Ascending aorta (tissue), 2 donors: ENCODE measurements at regions of chr5 and their contacts with region 1.

Region 1: GRCh38 chr5:137218471-137218870 is 280.7 kb downstream of the SPOCK1 start:
- DNase-seq: no peak
- H3K4me3 ChIP-seq: no peak overlapping the region
- H3K27ac ChIP-seq: no peak overlapping the region
- H3K4me1 ChIP-seq: peaks cover 0 to 4% of the 10 kb centered on the region in 2 donors
- H3K27me3 ChIP-seq: no peaks in the 10 kb centered on the region
- CTCF ChIP-seq: no peak

Region 2: GRCh38 chr5:136802383-136802782 is 416.1 kb before region 1 on chr5:
- intact Hi-C with region 1: loop called (anchors 10 kb)
- DNase-seq: no peak
- H3K4me3 ChIP-seq: no peak overlapping the region
- H3K27ac ChIP-seq: no peak overlapping the region
- H3K4me1 ChIP-seq: no peaks in the 10 kb centered on the region
- H3K27me3 ChIP-seq: no peaks in the 10 kb centered on the region
- CTCF ChIP-seq: peak in 2 of 3 experiments; percentile 28